ENCODE measurements at regions of chr1 and their contacts with region 1.

Region 1: DNA sequence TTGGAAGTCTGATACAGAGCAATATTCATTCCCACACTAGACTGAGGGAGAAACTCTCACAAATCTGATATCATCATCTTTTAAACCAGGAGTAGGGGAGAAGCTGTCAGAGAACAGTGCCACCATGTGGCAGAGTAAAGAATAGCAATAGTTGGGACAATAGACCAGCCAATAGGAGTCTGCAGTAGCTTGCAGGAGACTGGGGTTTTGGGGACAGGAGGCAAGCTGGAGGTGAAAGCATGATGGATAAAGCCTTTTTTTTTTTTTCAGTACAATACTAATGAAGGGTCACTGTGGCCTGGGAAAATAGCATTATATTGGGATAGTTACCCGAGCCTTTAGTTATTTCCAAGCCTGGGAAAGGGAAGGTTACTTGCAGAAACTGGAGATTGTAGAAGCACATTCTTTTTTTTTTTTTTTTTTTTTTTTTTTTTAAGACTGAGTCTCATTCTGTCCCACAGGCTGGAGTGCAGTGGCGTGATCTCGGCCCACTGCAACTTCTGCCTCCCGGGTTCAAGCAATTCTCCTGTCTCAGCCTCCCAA is 120.7 kb downstream of the S1PR1 start:
- DNase-seq: peak in 1 of 3 donors; percentile 17
- ATAC-seq: peak; percentile 90 to 94
- H3K4me3 ChIP-seq: no peak overlapping the region
- H3K27ac ChIP-seq: no peak overlapping the region
- H3K4me1 ChIP-seq: peaks cover 2% of the 10 kb centered on the region
- H3K27me3 ChIP-seq: no peaks in the 10 kb centered on the region

Region 2: GRCh38 chr1:100921109-100921706 is 436.3 kb before region 1 on chr1:
- intact Hi-C with region 1: loop called in 2 of 4 experiments (anchors 5 kb)
- DNase-seq: no peak
- ATAC-seq: peak in 1 of 2 donors; percentile 36
- H3K4me3 ChIP-seq: no peak overlapping the region
- H3K27ac ChIP-seq: no peak overlapping the region
- H3K4me1 ChIP-seq: no peaks in the 10 kb centered on the region
- H3K27me3 ChIP-seq: no peaks in the 10 kb centered on the region

Region 3: GRCh38 chr1:101288491-101288944 is 69.0 kb before region 1 on chr1:
- intact Hi-C with region 1: no loop called
- DNase-seq: peak; percentile 55 to 80 (median 57)
- ATAC-seq: peak; percentile 89 to 92
- H3K4me3 ChIP-seq: peak overlapping the region; percentile 39
- H3K27ac ChIP-seq: no peak overlapping the region
- H3K4me1 ChIP-seq: peaks cover 2% of the 10 kb centered on the region
- H3K27me3 ChIP-seq: no peaks in the 10 kb centered on the region

Region 4: GRCh38 chr1:101298663-101299062 is 58.9 kb before region 1 on chr1:
- intact Hi-C with region 1: no loop called
- DNase-seq: no peak
- ATAC-seq: peak in 1 of 2 donors; percentile 85
- H3K4me3 ChIP-seq: no peak overlapping the region
- H3K27ac ChIP-seq: no peak overlapping the region
- H3K4me1 ChIP-seq: no peaks in the 10 kb centered on the region
- H3K27me3 ChIP-seq: no peaks in the 10 kb centered on the region

Region 5: GRCh38 chr1:101309334-101310311 is 47.9 kb before region 1 on chr1:
- intact Hi-C with region 1: loop called in 2 of 4 experiments (anchors 5 kb)
- DNase-seq: peak; percentile 41 to 68 (median 62)
- ATAC-seq: peak; percentile 53 to 74
- H3K4me3 ChIP-seq: peak overlapping the region; percentile 47
- H3K27ac ChIP-seq: no peak overlapping the region
- H3K4me1 ChIP-seq: no peaks in the 10 kb centered on the region
- H3K27me3 ChIP-seq: no peaks in the 10 kb centered on the region

Measured in right cardiac atrium (tissue), 5 donors.